SK-N-SH (cell line): ENCODE measurements at regions of chr2 and their contacts with region 1.

Region 1: DNA sequence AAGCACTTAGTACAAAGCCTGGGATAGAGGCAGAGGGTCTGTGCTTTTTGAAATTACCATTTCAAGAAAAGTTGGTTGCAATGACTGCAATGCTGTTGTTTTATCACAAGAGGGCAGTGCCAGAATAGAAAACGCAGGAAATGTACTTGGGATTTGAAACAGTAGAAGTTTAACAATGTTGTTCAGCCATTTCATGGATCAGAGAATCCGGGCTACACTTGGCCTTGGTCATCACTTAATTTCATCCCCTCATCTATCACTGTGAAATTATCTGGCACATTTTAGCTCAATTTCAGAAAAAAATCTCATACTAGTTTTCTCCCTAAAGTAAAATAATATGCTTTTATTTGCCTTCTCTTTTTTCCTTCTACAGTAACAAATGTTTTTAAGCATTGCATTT is 70.8 kb downstream of the RAPGEF4 start:
- DNase-seq: peak; percentile 50
- H3K4me3 ChIP-seq: peak overlapping the region in 1 of 2 experiments; percentile 46; a peak in 1 of 4 replicates
- H3K27ac ChIP-seq: peak overlapping the region in 1 of 2 experiments; percentile 53; a peak in 2 of 4 replicates
- H3K4me1 ChIP-seq: peaks cover 0 to 20% of the 10 kb centered on the region in 2 experiments; a peak in 2 of 4 replicates
- H3K27me3 ChIP-seq: no peaks in the 10 kb centered on the region
- CTCF ChIP-seq: peak; percentile 95
- EP300 ChIP-seq: no peak
- RAD21 ChIP-seq: peak; percentile 99

Region 2: DNA sequence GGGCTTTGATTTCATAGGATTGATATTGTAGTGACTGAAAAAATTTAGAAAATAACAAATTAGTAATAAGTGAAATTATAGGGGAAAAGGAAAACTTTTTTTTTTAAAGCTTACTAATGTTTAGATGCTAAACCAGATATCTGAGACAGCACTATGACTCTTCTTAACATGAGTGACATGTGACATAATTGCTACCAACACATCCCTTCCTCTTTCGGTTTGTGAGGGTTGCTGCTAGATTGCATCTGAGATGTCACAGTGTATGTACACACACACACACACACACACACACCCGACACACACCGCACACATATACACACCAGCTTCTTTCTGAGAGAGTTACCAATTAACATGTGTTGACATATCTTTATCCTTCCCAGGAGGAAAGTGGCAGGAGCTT is 52.9 kb before region 1 on chr2:
- CTCF ChIA-PET with region 1: no interaction called
- POLR2A ChIA-PET with region 1: no interaction called
- DNase-seq: no peak
- H3K4me3 ChIP-seq: no peak overlapping the region
- H3K27ac ChIP-seq: no peak overlapping the region
- H3K4me1 ChIP-seq: no peaks in the 10 kb centered on the region; a peak in 1 of 4 replicates
- H3K27me3 ChIP-seq: no peaks in the 10 kb centered on the region
- CTCF ChIP-seq: no peak
- EP300 ChIP-seq: no peak
- RAD21 ChIP-seq: no peak

Region 3: DNA sequence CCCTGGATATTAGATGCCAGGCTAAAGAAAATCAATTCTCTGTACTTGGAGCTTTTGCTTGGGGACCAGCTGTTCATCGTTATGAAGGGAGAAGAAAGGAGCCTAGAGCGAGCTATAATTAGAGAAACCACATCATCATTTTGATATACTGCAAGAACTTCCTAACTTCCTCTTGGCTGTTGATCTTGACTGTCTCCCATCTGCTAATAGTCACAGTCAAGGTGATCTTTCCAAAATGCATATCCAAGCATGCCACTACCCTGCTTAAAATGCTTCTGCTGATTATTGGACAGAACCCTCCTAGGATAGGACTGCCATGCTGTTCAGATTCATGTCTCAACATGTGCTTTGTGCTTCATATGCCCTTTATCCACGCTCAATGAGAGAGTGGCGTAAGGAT is 16.1 kb before region 1 on chr2:
- CTCF ChIA-PET with region 1: interaction called, 19 read pairs
- POLR2A ChIA-PET with region 1: no interaction called
- DNase-seq: no peak
- H3K4me3 ChIP-seq: no peak overlapping the region
- H3K27ac ChIP-seq: peak overlapping the region in 1 of 2 experiments; percentile 76; a peak in 2 of 4 replicates
- H3K4me1 ChIP-seq: no peaks in the 10 kb centered on the region; a peak in 1 of 4 replicates
- H3K27me3 ChIP-seq: no peaks in the 10 kb centered on the region
- CTCF ChIP-seq: no peak
- EP300 ChIP-seq: no peak
- RAD21 ChIP-seq: no peak

Region 4: GRCh38 chr2:172830482-172830881 is 24.0 kb after region 1 on chr2:
- CTCF ChIA-PET with region 1: no interaction called
- POLR2A ChIA-PET with region 1: no interaction called
- DNase-seq: no peak
- H3K4me3 ChIP-seq: no peak overlapping the region
- H3K27ac ChIP-seq: no peak overlapping the region
- H3K4me1 ChIP-seq: 0 out of 4 replicates have a peak, but pooled peaks cover 0 to 7% of the 10 kb centered on the region in 2 experiments
- H3K27me3 ChIP-seq: no peaks in the 10 kb centered on the region
- CTCF ChIP-seq: no peak
- EP300 ChIP-seq: no peak
- RAD21 ChIP-seq: no peak

Region 5: GRCh38 chr2:172878260-172878659 is 71.8 kb after region 1 on chr2:
- CTCF ChIA-PET with region 1: interaction called, 15 read pairs
- POLR2A ChIA-PET with region 1: no interaction called
- DNase-seq: no peak
- H3K4me3 ChIP-seq: no peak overlapping the region
- H3K27ac ChIP-seq: no peak overlapping the region; a peak in 1 of 4 replicates
- H3K4me1 ChIP-seq: peaks cover 0 to 4% of the 10 kb centered on the region in 2 experiments; a peak in 2 of 4 replicates
- H3K27me3 ChIP-seq: no peaks in the 10 kb centered on the region
- CTCF ChIP-seq: no peak
- EP300 ChIP-seq: no peak
- RAD21 ChIP-seq: no peak

Region 6: DNA sequence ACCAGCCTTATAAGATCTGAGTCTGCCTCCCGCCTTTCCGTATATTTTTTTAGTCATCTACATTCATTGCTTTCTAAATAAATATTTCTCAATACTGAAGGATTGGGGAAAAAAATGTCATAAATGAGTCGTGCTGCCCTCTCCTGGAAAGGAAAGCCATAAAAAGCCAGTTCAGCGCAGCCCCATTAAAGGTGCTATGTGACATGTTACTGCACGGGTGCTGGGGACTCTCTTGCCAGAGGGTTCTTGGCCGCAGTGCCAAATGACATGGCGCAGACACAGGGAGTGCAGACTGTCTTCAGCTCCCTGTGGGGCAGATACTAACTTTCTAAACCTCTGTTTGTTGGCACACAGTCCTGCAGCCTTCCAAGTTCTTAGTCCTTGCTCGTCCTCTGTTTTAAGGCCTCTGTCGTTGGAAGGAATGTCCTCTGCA is 215.5 kb after region 1 on chr2:
- CTCF ChIA-PET with region 1: interaction called, 41 read pairs
- POLR2A ChIA-PET with region 1: no interaction called
- DNase-seq: peak; percentile 30
- H3K4me3 ChIP-seq: no peak overlapping the region
- H3K27ac ChIP-seq: no peak overlapping the region
- H3K4me1 ChIP-seq: peaks cover 0 to 2% of the 10 kb centered on the region in 2 experiments; a peak in 1 of 4 replicates
- H3K27me3 ChIP-seq: no peaks in the 10 kb centered on the region
- CTCF ChIP-seq: peak; percentile 54
- EP300 ChIP-seq: no peak
- RAD21 ChIP-seq: peak; percentile 41